Activated B cell treated with CpG ODN at 0.5 μM for 24 hours (primary cell): ENCODE measurements at regions of chr1 and their contacts with region 1.

Region 1: GRCh38 chr1:28329395-28330153 is 734 bp downstream of the MED18 start:
- DNase-seq: peak; percentile 50
- ATAC-seq: peak; percentile 11
- H3K4me3 Mint-ChIP-seq: peak overlapping the region; percentile 92
- H3K27ac Mint-ChIP-seq: peak overlapping the region; percentile 97
- H3K4me1 Mint-ChIP-seq: peaks cover 49% of the 10 kb centered on the region
- H3K27me3 Mint-ChIP-seq: peaks cover 2% of the 10 kb centered on the region
- CTCF ChIP-seq: no peak

Region 2: DNA sequence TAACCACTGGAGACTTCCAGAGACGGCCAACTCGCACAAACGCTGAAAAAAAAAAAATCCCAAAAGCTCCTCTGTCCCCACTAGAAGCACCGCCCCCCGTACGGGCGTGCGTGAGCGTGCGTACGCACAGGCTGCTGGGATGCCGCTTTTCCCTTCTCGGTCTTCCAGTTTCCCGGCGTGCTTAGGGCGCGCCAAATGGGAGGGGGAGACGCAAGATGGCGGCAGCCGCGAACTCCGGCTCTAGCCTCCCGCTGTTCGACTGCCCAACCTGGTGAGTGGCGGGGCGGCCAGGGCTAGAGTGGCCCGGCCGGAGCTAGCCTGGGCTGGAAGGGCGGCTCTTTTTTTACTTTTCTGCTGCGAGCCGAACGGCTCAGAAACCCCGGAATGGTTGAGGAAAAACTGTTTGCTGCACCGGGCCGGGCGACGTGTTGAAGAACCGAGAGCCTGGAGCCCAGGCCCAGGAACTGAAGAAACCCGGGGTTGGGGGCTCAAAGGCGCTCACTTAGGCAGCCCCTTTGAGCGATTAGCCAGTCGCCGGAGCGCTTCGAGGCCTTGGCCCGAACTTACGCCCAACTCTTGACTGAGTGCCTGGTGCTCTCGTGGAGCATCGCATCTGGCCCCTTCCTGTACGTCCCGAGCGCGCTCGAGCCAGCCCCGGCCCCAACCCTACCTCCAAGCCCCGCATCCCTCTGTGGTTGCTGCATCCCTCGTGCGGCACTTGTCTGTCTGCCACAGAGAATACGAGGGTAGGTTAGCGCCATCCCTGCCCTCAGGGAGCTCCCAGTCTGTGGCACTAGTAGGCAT is 498.8 kb before region 1 on chr1 and contains the start of gene PPP1R8:
- CTCF ChIA-PET with region 1: no interaction called
- POLR2A ChIA-PET with region 1: interaction called, 5 read pairs
- intact Hi-C with region 1: loop called (anchors 5 kb)
- DNase-seq: peak; percentile 84
- ATAC-seq: peak; percentile 98
- H3K4me3 Mint-ChIP-seq: peak within 1 kb of the TSS; percentile 95
- H3K27ac Mint-ChIP-seq: peak within 1 kb of the TSS; percentile 89
- H3K4me1 Mint-ChIP-seq: peaks cover 22% of the 10 kb centered on the region
- H3K27me3 Mint-ChIP-seq: no peaks in the 10 kb centered on the region
- CTCF ChIP-seq: no peak
- total RNA-seq, gene PPP1R8: 48.3 and 52.0 TPM in 2 replicates

Region 3: DNA sequence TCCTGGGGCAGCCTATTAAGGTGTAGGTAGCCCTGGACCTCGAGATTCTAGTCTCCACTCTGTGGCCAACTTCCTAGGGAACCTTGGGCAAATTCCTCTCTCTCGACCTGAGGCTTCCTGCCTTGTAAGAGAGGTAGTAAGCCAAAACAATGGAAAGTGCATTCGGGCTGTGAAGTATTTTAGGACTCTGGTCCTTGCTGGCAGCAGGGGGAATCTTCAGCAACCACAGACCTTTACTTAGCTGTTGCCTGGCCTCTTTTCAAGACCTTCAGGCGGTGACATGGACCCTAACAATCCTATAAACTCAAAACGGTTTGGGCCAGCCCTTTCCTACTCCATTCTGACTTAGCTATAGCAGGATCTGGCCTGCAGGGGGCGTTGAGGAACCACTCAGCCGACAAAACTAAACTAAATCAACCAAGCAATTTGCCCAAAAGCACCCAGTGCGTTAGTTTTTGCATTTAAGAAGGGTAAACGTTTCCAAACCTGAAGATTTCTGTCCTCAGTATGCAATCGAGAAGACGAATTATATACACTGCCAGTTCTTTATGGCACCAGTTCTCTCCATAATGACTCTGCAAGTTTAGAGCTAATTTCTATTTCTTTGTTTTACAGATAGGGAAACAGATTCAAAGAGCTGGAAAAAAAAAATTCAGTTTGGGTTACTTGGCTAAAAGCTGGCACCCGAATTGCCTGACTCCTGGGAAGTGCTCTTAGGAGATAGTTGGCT is 81.1 kb before region 1 on chr1:
- CTCF ChIA-PET with region 1: interaction called, 20 read pairs
- POLR2A ChIA-PET with region 1: interaction called, 144 read pairs
- intact Hi-C with region 1: loop called (anchors 1 kb)
- DNase-seq: peak; percentile 69
- ATAC-seq: peak; percentile 23
- H3K4me3 Mint-ChIP-seq: peak overlapping the region; percentile 72
- H3K27ac Mint-ChIP-seq: peak overlapping the region; percentile 99
- H3K4me1 Mint-ChIP-seq: peaks cover 58% of the 10 kb centered on the region
- H3K27me3 Mint-ChIP-seq: no peaks in the 10 kb centered on the region
- CTCF ChIP-seq: peak; percentile 57

Region 4: DNA sequence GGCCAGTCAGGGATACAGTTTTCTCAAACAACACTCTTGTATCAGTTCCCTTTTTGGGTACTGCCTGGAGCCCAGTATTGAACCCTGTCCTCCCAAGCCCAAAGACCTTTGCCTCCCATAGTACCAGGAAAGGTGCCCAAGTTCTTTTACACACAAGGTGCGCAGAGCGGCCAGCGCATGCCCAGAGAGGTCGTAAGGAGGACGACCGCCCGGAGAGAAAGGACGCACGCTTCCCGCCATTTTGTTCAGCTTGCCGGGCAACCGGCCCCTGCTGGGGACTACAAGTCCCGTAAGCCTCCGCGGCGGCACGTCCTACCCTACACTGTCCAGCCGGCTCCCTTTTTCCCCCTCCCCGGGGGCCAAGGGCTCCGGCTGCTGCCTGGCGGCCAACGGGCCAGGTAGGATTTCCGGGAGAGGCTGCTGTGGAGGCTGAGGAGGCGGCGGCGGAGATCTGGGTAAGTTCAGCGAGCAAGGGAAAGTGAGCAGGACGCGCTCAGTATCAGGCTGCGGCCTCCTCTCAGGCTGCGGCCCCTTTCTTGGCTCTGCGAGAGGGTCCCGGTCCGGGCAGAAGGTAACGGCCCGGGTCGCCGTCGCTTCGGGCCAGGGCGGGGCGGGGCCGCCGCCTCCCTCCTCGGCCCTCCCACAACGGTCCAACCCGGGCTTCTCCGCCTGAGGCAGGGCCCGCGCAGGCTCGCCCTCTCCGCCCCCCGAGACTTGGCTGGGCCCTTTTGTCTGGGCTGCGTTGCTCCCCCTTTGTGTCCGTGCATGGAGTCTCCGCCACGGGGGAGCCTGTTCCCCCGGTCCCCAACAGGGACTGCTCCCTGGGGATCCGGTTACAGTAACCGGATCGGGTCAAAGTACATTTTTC is 40.0 kb after region 1 on chr1 and contains the start of gene PHACTR4:
- CTCF ChIA-PET with region 1: no interaction called
- POLR2A ChIA-PET with region 1: interaction called, 53 read pairs
- intact Hi-C with region 1: loop called (anchors 2 kb)
- DNase-seq: peak; percentile 74
- ATAC-seq: peak; percentile 89
- H3K4me3 Mint-ChIP-seq: peak within 1 kb of the TSS; percentile 96
- H3K27ac Mint-ChIP-seq: peak within 1 kb of the TSS; percentile 98
- H3K4me1 Mint-ChIP-seq: peaks cover 21% of the 10 kb centered on the region
- H3K27me3 Mint-ChIP-seq: no peaks in the 10 kb centered on the region
- CTCF ChIP-seq: no peak
- total RNA-seq, gene PHACTR4: 27.2 and 31.5 TPM in 2 replicates

Region 5: GRCh38 chr1:28642847-28643635 is 313.5 kb after region 1 on chr1 and contains the start of gene TAF12:
- CTCF ChIA-PET with region 1: no interaction called
- POLR2A ChIA-PET with region 1: interaction called, 40 read pairs
- intact Hi-C with region 1: loop called (anchors 1 kb)
- DNase-seq: peak; percentile 78
- ATAC-seq: peak; percentile 80
- H3K4me3 Mint-ChIP-seq: peak within 1 kb of the TSS; percentile 96
- H3K27ac Mint-ChIP-seq: peak within 1 kb of the TSS; percentile 97
- H3K4me1 Mint-ChIP-seq: peaks cover 50% of the 10 kb centered on the region
- H3K27me3 Mint-ChIP-seq: no peaks in the 10 kb centered on the region
- CTCF ChIP-seq: no peak
- total RNA-seq, gene TAF12: 17.1 and 18.5 TPM in 2 replicates

Region 6: DNA sequence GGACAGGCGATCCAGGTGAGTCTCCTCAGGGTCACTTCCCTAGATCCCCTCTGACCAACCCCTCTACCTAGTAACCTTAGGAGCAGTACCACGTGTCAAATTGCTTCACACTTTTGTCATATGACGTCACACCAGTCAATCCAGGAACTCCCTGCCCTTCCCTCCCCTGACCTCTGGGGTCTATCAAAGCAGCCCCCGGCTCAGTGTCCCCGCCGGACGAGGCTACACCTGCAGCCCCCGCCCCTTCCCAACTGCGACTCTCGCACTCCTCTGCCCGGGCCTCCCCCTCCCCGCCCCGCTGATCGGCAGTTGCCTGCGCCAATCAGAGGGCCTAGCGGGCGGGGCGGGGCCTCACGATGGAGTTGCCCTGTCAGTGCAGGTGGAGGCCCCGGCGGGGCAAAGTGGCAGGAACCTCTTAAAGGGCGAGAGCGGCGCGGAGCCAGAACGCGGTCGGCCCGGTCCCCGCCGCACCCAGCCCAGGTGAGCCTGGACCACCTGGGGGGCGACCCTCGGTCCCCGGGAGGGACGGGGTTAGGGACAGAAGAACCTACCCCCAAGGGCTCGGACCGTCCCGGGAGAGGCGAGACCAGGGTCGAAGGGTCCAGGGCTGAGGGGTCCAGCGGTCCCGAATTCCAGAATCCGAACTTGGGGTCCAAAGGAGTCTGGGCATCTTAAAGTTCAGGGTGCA is 557.3 kb after region 1 on chr1:
- CTCF ChIA-PET with region 1: no interaction called
- POLR2A ChIA-PET with region 1: interaction called, 11 read pairs
- intact Hi-C with region 1: no loop called
- DNase-seq: peak; percentile 94
- ATAC-seq: peak; percentile 75
- H3K4me3 Mint-ChIP-seq: peak overlapping the region; percentile 88
- H3K27ac Mint-ChIP-seq: peak overlapping the region; percentile 91
- H3K4me1 Mint-ChIP-seq: peaks cover 58% of the 10 kb centered on the region
- H3K27me3 Mint-ChIP-seq: no peaks in the 10 kb centered on the region
- CTCF ChIP-seq: no peak